ENCODE measurements at regions of chr3 and their contacts with region 1.

Region 1: DNA sequence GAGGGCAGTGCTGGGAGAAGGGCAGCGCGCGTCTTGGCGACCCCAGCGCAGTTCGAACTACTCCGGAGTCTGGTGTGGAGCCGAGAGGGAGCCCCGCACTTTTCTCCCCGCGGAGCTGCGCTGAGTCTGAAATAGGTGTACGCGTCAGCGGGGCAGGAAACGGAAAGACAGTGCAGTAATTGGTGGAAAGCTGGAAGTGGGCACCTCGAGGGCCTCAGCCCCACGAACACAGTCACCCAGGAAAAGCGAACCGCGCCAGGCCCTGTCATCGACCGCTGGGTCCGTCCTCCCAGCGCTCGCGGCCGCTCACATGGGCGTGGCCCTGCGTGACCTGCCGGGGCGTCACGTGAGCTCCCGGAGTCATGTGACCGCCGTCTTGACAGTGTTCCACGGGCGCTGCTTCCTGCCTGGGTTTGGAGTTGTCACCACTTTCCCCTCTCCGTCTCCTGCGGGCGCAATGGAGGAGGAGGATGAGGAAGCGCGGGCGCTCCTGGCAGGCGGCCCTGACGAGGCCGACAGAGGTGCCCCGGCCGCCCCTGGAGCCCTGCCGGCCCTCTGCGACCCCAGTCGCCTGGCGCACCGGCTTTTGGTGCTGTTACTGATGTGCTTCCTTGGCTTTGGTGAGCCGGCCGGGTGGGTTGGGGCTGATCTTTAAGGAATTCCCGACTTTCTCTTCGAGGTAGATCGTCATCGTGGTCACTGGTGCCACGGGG is at the start of gene MFSD1:
- DNase-seq: peak; percentile 82 to 93
- ATAC-seq: peak; percentile 93 to 95 (median 95)
- H3K4me3 ChIP-seq: peak within 1 kb of the TSS; percentile 79
- H3K4me3 Mint-ChIP-seq: peak within 1 kb of the TSS; percentile 90
- H3K27ac ChIP-seq: peak within 1 kb of the TSS; percentile 72
- H3K27ac Mint-ChIP-seq: peak within 1 kb of the TSS; percentile 80 to 89
- H3K4me1 ChIP-seq: peaks cover 17% of the 10 kb centered on the region
- H3K4me1 Mint-ChIP-seq: peaks cover 28 to 31% of the 10 kb centered on the region in 2 donors
- H3K27me3 ChIP-seq: no peaks in the 10 kb centered on the region
- H3K27me3 Mint-ChIP-seq: peaks cover 0 to 1% of the 10 kb centered on the region in 2 donors
- CTCF ChIP-seq: no peak
- total RNA-seq, gene MFSD1: 27.3 to 37.3 (median 33.6) TPM

Region 2: DNA sequence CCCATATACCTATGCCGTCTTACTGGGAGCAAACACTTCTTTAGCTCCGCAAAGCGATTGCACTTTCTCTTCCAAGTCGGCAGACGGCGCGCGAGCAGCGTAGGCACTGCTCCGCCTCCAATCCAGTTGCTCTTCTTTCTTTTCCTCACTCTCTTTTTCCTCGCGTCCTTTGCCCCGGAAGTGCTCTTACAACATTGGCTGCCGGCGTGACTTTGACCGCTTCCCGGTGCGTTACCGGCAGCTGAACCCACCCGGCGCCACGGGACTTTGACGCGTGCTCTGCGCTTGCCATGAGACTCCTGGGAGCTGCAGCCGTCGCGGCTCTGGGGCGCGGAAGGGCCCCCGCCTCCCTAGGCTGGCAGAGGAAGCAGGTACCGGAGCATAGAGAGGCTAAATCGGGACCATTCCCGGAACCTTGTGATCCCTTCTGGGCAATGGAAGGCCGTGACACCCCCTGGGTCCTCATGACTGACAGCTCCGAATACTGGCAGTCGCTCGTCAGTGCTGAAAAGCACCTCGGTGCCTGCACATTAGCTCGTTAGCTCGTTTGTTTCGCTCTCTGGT is 157.4 kb before region 1 on chr3 and contains the start of gene GFM1:
- intact Hi-C with region 1: loop called (anchors 2 kb)
- DNase-seq: peak; percentile 80 to 97
- ATAC-seq: peak; percentile 94 to 97 (median 95)
- H3K4me3 ChIP-seq: peak within 1 kb of the TSS; percentile 99
- H3K4me3 Mint-ChIP-seq: peak within 1 kb of the TSS; percentile 99
- H3K27ac ChIP-seq: peak within 1 kb of the TSS; percentile 78
- H3K27ac Mint-ChIP-seq: peak within 1 kb of the TSS; percentile 86 to 94
- H3K4me1 ChIP-seq: peaks cover 3% of the 10 kb centered on the region
- H3K4me1 Mint-ChIP-seq: peaks cover 29 to 36% of the 10 kb centered on the region in 2 donors
- H3K27me3 ChIP-seq: no peaks in the 10 kb centered on the region
- H3K27me3 Mint-ChIP-seq: no peaks in the 10 kb centered on the region
- CTCF ChIP-seq: peak; percentile 84
- total RNA-seq, gene GFM1: 38.4 to 55.5 (median 50.4) TPM

Region 3: DNA sequence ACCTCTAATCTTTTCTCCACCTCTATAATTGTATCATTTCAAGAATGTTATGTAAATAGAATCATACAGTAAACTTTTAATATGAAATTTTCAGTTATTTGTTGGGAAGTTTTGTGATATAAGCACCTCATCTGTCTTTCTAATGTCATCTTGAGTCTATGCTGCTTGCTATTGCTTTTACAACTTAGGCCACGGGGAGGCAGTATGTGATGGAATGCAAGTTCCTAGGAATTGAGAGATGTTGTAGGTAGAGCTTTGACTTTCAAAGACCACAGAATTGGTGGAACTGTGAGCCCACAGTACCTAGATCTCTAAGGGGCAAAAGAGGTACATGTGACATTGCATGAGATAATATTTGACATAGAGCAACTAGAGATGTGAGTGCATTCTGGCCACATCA is 328.3 kb after region 1 on chr3:
- intact Hi-C with region 1: no loop called
- DNase-seq: no peak
- ATAC-seq: no peak
- H3K4me3 ChIP-seq: no peak overlapping the region
- H3K4me3 Mint-ChIP-seq: no peak overlapping the region
- H3K27ac ChIP-seq: no peak overlapping the region
- H3K27ac Mint-ChIP-seq: no peak overlapping the region
- H3K4me1 ChIP-seq: no peaks in the 10 kb centered on the region
- H3K4me1 Mint-ChIP-seq: no peaks in the 10 kb centered on the region
- H3K27me3 ChIP-seq: no peaks in the 10 kb centered on the region
- H3K27me3 Mint-ChIP-seq: no peaks in the 10 kb centered on the region
- CTCF ChIP-seq: no peak

Measured in natural killer cell (primary cell).